Endothelial cell of umbilical vein (primary cell): ENCODE measurements at regions of chr11 and their contacts with region 1.

Region 1: DNA sequence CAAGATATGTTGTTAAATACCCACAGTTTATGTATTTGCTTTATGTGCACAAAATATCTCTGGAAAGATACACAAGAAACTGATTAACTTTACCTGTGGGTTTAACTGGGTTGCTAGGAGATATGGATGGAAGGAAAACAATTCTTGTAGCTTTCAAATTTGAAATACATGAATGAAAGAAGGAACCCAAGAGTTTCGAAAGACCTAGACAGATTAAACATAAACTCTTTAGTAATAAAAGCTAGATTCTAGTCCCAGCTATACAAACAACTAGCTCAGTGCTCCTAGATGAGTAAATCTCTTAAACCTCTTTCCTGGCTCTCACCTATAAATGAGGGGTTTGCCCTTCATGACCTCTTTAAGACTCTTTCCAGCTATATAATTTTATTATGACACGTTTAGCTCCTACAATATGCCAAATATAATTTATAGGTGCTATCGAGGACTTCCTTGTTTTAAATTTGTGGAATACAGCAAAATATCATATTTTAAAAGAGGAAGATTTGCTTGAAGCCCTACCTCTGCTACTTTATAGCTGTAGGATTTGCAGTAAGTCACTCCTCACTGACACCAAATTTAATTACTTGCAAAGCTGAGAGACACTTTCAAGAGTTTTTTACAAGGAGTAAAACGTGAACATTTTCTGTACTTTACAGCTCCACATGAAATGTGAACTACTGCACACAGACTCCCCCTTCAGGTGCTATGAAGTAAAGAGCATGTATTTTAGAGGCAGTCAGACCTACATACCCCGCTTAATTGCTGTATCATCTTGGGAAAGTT is 50.7 kb downstream of the RRAS2 start:
- DNase-seq: peak; percentile 53
- H3K4me3 ChIP-seq: no peak overlapping the region
- H3K27ac ChIP-seq: no peak overlapping the region
- H3K4me1 ChIP-seq: peaks cover 4% of the 10 kb centered on the region
- H3K27me3 ChIP-seq: no peaks in the 10 kb centered on the region
- CTCF ChIP-seq: peak; percentile 42 to 62
- POLR2A ChIP-seq: no peak

Region 2: DNA sequence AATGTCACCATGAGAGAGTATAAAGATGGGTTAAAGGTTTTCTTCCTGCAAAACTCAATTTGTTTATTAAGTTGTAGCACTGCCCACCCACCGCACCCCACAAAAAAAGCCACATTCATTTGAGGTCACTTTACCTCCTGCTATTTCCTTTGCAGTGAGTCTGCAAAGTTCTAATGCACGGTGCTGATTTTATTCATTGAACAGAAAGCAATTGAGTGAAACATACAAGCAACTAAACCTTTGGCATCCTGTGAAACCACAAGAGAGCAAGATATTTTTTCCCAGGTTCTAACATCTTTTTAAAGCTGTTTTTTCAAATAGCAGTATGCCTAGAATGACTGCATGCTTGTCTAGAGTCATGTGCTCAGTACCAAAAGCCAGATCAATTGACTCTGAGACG is 11.7 kb after region 1 on chr11:
- CTCF ChIA-PET with region 1: interaction called, 44 read pairs
- POLR2A ChIA-PET with region 1: interaction called, 5 read pairs
- dilution Hi-C with region 1: no loop called
- intact Hi-C with region 1: no loop called
- DNase-seq: no peak
- H3K4me3 ChIP-seq: no peak overlapping the region
- H3K27ac ChIP-seq: no peak overlapping the region
- H3K4me1 ChIP-seq: peaks cover 69% of the 10 kb centered on the region
- H3K27me3 ChIP-seq: no peaks in the 10 kb centered on the region
- CTCF ChIP-seq: no peak
- POLR2A ChIP-seq: no peak

Region 3: DNA sequence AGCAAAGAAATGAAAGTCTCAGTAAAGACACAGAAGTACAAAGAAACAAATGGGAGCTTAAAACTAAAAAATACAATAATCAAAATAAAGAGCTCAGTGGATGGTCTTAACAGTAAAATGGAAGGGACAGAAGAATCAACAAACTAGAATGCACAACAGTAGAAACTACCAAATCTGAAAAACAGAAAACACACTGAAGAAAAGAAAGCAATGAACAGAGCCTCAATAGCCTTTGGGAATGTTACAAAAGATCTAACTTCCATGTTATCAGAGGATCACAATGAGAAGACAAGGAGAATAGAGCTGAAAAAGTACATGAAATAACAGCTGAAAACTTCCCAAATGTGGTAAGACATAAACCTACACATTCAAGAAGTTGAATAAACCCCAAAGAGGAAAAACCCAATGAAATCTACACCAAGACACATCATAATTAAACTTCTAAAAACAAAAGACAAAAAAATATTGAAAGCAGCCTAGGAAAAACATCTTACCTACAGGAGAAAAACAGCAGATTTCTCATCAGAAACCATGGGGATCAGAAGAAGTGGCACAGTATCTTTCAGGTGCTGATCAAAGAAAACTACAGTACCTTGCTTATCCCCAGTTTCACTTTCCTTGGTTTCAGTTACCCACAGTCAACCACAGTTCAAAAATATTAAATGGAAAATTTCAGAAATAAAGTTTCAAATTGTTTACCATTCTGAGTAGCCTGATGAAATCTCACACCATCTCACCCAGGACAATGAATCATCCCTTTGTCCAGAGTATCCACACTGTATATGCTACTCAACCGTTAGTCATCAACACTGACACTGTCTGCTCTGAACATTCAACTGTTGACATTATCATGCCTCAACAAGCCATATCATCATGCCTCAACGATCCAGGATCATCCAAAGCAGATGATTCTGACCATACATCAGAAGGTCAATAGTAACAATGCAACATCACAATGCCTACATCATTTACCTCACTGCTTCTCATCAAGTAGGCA is 28.5 kb after region 1 on chr11:
- CTCF ChIA-PET with region 1: interaction called, 17 read pairs
- POLR2A ChIA-PET with region 1: no interaction called
- dilution Hi-C with region 1: no loop called
- intact Hi-C with region 1: no loop called
- DNase-seq: peak; percentile 71
- H3K4me3 ChIP-seq: no peak overlapping the region
- H3K27ac ChIP-seq: peak overlapping the region; percentile 9
- H3K4me1 ChIP-seq: peaks cover 17% of the 10 kb centered on the region
- H3K27me3 ChIP-seq: no peaks in the 10 kb centered on the region
- CTCF ChIP-seq: no peak
- POLR2A ChIP-seq: no peak

Region 4: DNA sequence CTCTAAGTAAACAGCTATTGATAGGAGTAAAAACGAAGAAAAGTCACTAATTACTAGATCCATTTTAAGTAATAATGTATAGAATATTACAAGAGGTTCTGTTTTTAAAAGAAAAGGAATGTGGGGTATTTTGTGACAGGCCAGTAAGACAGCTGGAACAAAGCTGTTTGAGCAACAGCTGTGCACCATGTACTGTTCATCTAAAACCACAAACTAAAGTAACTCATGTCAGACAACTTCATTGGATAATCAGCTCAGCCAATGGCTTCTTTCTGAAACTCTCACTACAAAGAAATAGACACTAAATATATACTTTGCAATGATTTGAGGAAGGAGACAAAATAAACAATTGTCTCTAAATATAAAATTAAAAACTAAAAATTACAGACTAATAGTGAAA is 34.6 kb after region 1 on chr11:
- CTCF ChIA-PET with region 1: interaction called, 17 read pairs
- POLR2A ChIA-PET with region 1: no interaction called
- dilution Hi-C with region 1: no loop called
- intact Hi-C with region 1: no loop called
- DNase-seq: no peak
- H3K4me3 ChIP-seq: no peak overlapping the region
- H3K27ac ChIP-seq: no peak overlapping the region
- H3K4me1 ChIP-seq: peaks cover 5% of the 10 kb centered on the region
- H3K27me3 ChIP-seq: no peaks in the 10 kb centered on the region
- CTCF ChIP-seq: no peak
- POLR2A ChIP-seq: no peak

Region 5: DNA sequence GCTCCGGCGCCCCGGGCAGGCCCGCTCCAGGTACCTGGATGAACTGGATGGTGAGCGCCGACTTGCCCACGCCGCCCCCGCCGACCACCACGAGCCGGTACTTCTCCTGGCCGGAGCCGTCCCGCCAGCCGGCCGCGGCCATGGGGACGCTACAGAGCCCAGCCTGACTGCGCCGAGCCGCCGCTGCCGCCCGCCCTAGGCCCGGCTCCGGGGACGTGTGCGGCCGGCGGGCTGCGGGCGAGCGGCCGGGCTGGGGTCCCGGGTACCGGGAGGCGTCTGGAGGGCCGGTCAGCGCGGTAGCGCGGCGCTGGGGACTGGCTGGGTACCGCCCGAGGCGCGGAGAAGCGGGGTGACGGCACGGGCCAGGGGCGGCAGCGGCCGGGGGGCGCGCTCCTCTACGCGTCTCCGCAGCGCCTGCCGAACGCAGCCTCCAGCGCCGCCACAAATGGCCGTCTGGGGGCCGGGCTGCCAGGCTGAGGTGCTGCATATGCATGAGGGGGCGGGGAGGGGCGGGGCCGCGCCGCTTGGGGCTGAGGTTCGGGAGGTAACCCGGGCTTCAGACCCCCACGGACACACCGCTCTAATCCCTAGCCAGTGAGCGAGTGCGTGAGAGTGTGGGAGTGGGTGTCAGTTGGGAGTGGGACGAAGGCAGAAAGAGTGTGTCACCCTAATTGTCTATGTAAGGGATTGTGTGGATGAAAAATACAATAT is 50.6 kb after region 1 on chr11 and contains the start of gene RRAS2:
- CTCF ChIA-PET with region 1: interaction called, 22 read pairs
- POLR2A ChIA-PET with region 1: interaction called, 6 read pairs
- dilution Hi-C with region 1: no loop called
- intact Hi-C with region 1: loop called (anchors 2 kb)
- DNase-seq: peak; percentile 77
- H3K4me3 ChIP-seq: peak within 1 kb of the TSS; percentile 57 to 84 (median 75)
- H3K27ac ChIP-seq: peak within 1 kb of the TSS; percentile 46
- H3K4me1 ChIP-seq: peaks cover 9% of the 10 kb centered on the region
- H3K27me3 ChIP-seq: no peaks in the 10 kb centered on the region
- CTCF ChIP-seq: no peak
- POLR2A ChIP-seq: peak; percentile 85
- total RNA-seq, gene RRAS2: 80.5 and 84.4 TPM in 2 replicates

Region 6: GRCh38 chr11:14380947-14381561 is 72.7 kb after region 1 on chr11:
- CTCF ChIA-PET with region 1: interaction called, 14 read pairs
- POLR2A ChIA-PET with region 1: no interaction called
- dilution Hi-C with region 1: no loop called
- intact Hi-C with region 1: no loop called
- DNase-seq: peak; percentile 73
- H3K4me3 ChIP-seq: peak overlapping the region; percentile 24 to 55 (median 40)
- H3K27ac ChIP-seq: peak overlapping the region; percentile 15
- H3K4me1 ChIP-seq: peaks cover 12% of the 10 kb centered on the region
- H3K27me3 ChIP-seq: no peaks in the 10 kb centered on the region
- CTCF ChIP-seq: no peak
- POLR2A ChIP-seq: peak; percentile 60

Region 7: GRCh38 chr11:15446929-15447328 is 1138.6 kb after region 1 on chr11:
- CTCF ChIA-PET with region 1: no interaction called
- POLR2A ChIA-PET with region 1: no interaction called
- dilution Hi-C with region 1: no loop called
- intact Hi-C with region 1: no loop called
- DNase-seq: no peak
- H3K4me3 ChIP-seq: no peak overlapping the region
- H3K27ac ChIP-seq: no peak overlapping the region
- H3K4me1 ChIP-seq: no peaks in the 10 kb centered on the region
- H3K27me3 ChIP-seq: no peaks in the 10 kb centered on the region
- CTCF ChIP-seq: no peak
- POLR2A ChIP-seq: no peak